HEK293 (cell line): ENCODE measurements at regions of chrX and their contacts with region 1.

Region 1: DNA sequence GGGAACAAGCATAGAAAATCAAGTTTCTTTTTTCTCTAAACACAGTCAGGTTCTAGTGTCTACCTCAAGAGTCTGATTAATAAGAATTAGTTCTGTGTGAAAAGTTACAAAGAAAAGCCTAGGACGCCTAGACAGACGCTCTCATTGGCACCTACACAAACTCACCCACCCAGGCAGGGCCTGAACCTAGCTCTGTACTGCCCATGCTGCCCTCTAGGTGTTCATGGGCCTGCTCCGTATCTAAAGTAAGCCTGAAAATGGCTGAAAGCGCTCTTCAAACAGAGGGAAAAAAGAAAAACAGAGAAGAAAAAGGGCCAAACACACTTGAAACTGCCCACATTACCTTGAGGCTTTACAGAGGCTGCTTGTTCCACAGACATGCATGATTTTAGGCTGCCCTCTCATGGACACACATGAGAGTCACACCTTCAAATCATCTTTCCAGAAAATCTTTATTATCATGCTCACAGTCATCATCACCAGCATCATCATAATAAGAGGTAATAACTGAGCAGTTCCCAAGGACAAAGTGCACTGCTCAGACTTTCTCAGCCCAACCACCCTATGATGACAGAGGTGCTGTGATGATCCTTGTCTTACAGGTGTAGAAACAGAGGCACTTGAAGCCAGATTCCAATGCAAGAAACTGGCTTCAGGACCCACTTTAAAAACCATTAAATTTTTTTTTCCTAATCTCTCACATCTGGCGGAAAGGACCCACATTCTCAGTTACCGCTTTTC is 49.6 kb downstream of the MAP7D2 start:
- H3K4me3 ChIP-seq: no peak overlapping the region
- H3K27ac ChIP-seq: no peak overlapping the region
- H3K4me1 ChIP-seq: no peaks in the 10 kb centered on the region
- CTCF ChIP-seq: peak; percentile 67

Region 2: DNA sequence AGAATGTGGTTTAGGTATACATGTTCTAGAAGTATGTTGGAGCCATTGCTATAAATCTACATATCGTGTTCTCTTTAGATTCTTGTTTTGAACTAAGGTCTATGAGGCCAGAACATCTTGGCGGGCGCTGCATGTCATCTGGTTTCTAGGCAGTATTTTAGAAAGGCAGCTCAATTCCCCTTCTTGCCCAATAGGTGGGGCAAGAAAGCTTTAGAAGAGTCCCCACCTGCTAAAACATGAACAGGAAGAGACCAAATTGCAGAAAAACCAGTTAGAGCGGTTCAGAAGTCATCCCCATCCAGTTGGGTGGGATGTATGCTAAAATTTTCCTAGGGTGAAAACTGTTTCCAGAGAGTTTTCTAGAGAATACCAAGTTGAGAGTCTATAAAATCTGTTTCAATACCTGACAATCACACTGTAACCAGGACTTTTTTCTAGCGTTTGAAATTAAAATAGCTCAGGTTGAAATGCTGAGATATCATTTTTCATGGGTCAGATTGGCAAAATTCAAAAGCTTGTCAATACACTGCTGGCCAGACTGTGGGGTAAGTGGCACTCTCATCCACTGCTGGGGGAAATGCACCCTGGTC is 162.3 kb before region 1 on chrX:
- CTCF ChIA-PET with region 1: interaction called, 79 read pairs
- POLR2A ChIA-PET with region 1: interaction called, 4 read pairs
- H3K4me3 ChIP-seq: no peak overlapping the region
- H3K27ac ChIP-seq: no peak overlapping the region
- H3K4me1 ChIP-seq: no peaks in the 10 kb centered on the region; the same call in 1 of the 2 replicates
- CTCF ChIP-seq: no peak

Region 3: GRCh38 chrX:20056704-20057103 is 10.4 kb before region 1 on chrX:
- CTCF ChIA-PET with region 1: interaction called, 10 read pairs
- POLR2A ChIA-PET with region 1: no interaction called
- H3K4me3 ChIP-seq: no peak overlapping the region
- H3K27ac ChIP-seq: no peak overlapping the region
- H3K4me1 ChIP-seq: no peaks in the 10 kb centered on the region
- CTCF ChIP-seq: no peak

Region 4: DNA sequence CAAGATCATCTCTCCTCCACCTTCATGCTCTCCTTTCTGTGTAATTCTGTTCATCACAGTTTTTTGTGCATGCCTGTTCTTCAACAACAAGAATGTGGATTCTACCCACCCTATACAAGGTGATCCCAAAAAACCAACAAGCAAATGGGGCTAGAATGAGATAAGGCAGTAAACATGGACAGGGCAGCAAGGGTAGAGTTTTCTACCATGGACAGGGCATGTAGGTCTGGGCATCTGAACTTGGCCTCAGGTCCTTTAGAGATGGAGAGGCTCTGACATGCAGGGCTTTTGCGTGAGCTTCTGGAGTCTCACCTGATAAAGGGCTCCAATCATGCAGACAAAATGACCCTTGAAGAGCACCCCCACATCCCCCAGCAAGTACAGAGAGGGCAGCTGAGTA is 13.1 kb after region 1 on chrX:
- CTCF ChIA-PET with region 1: interaction called, 12 read pairs
- POLR2A ChIA-PET with region 1: no interaction called
- H3K4me3 ChIP-seq: no peak overlapping the region
- H3K27ac ChIP-seq: no peak overlapping the region
- H3K4me1 ChIP-seq: no peaks in the 10 kb centered on the region
- CTCF ChIP-seq: no peak

Region 5: GRCh38 chrX:20101934-20102581 is 34.9 kb after region 1 on chrX:
- CTCF ChIA-PET with region 1: no interaction called
- POLR2A ChIA-PET with region 1: no interaction called
- H3K4me3 ChIP-seq: no peak overlapping the region
- H3K27ac ChIP-seq: no peak overlapping the region
- H3K4me1 ChIP-seq: no peaks in the 10 kb centered on the region
- CTCF ChIP-seq: no peak

Region 6: GRCh38 chrX:20333672-20334071 is 266.5 kb after region 1 on chrX:
- CTCF ChIA-PET with region 1: no interaction called
- POLR2A ChIA-PET with region 1: no interaction called
- H3K4me3 ChIP-seq: no peak overlapping the region
- H3K27ac ChIP-seq: no peak overlapping the region
- H3K4me1 ChIP-seq: no peaks in the 10 kb centered on the region
- CTCF ChIP-seq: no peak